ENCODE measurements at regions of chr9 and their contacts with region 1.

Region 1: DNA sequence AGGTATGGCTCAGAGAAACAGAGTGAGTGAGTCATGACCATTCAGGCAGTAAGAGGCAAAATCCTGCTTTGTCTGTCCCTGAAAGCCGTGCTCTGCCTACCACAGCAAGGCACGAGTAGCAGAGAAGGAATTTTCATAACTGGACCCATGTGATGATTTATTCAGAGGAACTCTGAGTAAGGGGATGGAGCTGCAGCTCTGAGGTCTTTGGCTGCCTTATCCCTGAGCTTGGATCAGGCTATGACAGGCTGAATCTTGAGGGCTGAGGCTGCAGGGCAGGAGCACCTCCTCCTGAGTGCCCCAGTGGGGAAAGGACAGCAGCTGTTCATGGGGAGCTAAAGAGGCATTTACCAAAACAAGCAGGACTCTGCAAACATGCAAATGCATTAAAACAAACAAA is 183.4 kb downstream of the PAPPA start:
- DNase-seq: peak; percentile 31
- H3K4me3 ChIP-seq: no peak overlapping the region
- H3K27ac ChIP-seq: no peak overlapping the region
- H3K4me1 ChIP-seq: no peaks in the 10 kb centered on the region
- H3K27me3 ChIP-seq: peaks cover 4% of the 10 kb centered on the region
- CTCF ChIP-seq: no peak

Region 2: DNA sequence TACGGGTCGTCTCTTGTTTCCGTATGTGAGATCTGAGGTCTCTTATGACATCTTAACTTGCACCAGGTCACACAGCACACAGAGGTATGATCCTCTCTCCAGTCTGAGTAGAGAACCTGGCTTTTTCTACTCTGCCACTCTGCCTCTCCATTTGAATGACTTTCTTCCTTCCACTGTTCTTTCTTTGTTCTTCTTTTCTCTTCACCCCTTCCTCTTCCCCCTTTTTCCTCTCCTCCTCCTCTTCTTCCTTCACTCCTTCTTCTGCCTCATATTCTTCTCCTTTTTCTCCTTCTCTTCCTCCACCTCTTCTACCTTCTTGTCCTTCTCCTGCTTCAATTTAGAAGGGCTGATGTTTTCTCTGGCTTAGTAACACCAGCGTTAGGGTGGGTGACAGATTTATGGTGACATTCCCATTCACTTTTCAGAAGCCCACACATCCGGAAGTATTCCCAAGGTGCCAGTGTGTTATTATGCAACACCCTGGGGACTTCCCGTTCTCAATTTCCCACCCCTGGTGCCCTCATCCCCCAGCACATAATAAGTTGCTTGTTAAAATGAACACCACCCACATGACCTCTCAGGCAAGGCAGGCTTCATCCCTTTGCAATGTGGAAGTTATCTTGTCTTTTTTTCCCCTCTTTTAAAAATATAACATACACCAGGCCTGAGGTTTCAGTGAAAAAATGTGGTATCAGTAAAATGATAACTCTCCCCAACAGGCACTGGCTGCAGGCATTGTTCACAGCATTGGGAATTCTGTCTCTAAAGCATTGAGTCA is 61.4 kb before region 1 on chr9:
- CTCF ChIA-PET with region 1: no interaction called
- dilution Hi-C with region 1: no loop called
- in situ Hi-C with region 1: no loop called
- intact Hi-C with region 1: no loop called
- DNase-seq: no peak
- H3K4me3 ChIP-seq: no peak overlapping the region
- H3K27ac ChIP-seq: no peak overlapping the region
- H3K4me1 ChIP-seq: peaks cover 6% of the 10 kb centered on the region
- H3K27me3 ChIP-seq: no peaks in the 10 kb centered on the region
- CTCF ChIP-seq: no peak

Region 3: GRCh38 chr9:116288658-116289057 is 48.4 kb before region 1 on chr9:
- CTCF ChIA-PET with region 1: no interaction called
- dilution Hi-C with region 1: no loop called
- in situ Hi-C with region 1: no loop called
- intact Hi-C with region 1: loop called (anchors 5 kb)
- DNase-seq: peak; percentile 96
- H3K4me3 ChIP-seq: no peak overlapping the region
- H3K27ac ChIP-seq: no peak overlapping the region
- H3K4me1 ChIP-seq: no peaks in the 10 kb centered on the region
- H3K27me3 ChIP-seq: peaks cover 12% of the 10 kb centered on the region
- CTCF ChIP-seq: no peak

Region 4: DNA sequence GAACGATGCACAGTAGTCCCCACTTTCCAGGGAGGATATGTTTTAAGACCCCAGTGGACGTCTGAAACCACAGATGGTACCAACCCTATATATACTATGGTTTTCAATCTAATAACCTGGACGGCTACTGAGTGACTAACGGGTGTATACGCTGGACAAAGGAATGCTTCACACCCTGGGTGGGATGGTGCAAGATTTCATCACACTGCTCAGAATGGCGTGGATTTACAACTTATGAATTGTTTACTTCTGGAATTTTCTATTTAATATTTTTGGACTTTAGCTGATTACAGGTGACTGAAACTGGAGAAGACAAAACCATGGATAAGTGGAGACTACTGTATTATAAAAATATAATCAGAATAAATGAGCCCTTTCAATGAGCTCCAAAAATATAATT is 202.5 kb after region 1 on chr9:
- CTCF ChIA-PET with region 1: no interaction called
- dilution Hi-C with region 1: no loop called
- in situ Hi-C with region 1: no loop called
- intact Hi-C with region 1: no loop called
- DNase-seq: no peak
- H3K4me3 ChIP-seq: no peak overlapping the region
- H3K27ac ChIP-seq: no peak overlapping the region
- H3K4me1 ChIP-seq: no peaks in the 10 kb centered on the region
- H3K27me3 ChIP-seq: no peaks in the 10 kb centered on the region
- CTCF ChIP-seq: no peak

Region 5: DNA sequence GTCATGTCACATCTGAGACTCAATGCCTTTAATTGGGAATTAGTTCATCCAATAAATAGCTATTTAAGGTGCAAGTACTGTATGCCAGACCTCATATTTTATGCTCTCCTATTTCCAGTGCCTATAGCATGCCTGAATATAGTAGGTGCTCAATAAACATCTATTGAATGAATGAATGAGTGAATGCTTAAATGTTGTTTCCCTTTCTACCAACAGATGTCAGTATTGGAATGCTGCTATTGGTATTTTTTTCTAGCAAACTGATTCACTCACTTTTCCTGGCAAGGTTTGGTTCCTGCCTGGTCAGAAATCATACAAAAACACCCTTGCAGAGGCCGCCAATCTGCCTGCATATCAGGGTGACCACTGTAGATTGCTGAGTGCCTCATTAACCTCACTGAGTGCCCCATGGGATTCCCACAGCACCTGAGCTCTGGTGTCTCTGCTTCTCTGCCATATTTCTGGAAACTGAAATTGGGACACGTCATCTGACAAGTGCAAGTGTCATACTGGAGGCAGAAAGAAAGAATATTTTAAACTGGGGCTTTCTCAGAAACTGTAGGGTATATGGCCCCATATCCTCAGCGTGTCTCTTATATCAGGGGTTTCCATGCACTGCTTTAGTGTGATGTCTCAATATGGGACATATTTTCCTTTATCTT is 709.8 kb after region 1 on chr9:
- CTCF ChIA-PET with region 1: no interaction called
- dilution Hi-C with region 1: no loop called
- in situ Hi-C with region 1: no loop called
- intact Hi-C with region 1: no loop called
- DNase-seq: no peak
- H3K4me3 ChIP-seq: no peak overlapping the region
- H3K27ac ChIP-seq: no peak overlapping the region
- H3K4me1 ChIP-seq: no peaks in the 10 kb centered on the region
- H3K27me3 ChIP-seq: peaks cover 2% of the 10 kb centered on the region
- CTCF ChIP-seq: peak; percentile 27 to 38